ENCODE measurements at regions of chr12 and their contacts with region 1.

Region 1: DNA sequence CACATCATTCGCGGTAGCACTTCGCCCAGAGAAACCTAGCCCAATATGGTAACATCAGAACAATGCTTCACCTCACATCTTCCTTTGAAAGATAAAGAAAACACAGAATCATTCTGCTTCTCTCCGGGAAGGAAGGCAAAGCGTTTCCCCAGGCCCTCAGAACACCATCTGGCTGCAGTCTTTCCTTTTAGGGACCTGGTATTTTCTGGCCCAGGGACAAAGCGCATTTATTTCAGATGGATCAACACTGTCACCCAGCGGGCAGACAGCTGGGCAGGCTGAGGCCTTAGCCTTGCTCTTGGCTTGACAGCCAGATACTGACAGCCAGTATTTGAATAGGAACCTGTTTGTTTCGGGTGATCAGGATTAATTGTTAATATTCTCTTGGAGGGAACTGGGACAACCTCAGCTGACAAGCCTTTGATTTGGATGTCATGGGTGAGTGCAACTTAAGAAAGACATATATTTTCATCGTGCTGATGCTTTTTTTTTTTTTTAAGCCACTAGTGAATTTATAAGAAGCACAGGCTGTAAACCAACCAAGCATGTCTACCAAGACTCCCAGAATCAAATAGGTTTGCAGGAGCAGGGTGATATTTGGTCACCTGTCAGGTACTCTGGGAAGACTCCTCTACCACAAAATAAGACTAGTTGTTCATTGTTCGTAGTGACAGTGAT is 118.9 kb downstream of the VEZT start:
- DNase-seq: peak; percentile 77 to 90
- ATAC-seq: peak; percentile 85 to 88
- H3K4me3 ChIP-seq: no peak overlapping the region
- H3K27ac ChIP-seq: peak overlapping the region; percentile 72 to 87
- H3K4me1 ChIP-seq: peaks cover 66% of the 10 kb centered on the region
- CTCF ChIP-seq: peak; percentile 99
- EP300 ChIP-seq: no peak
- POLR2A ChIP-seq: no peak
- RAD21 ChIP-seq: peak; percentile 99 to 100

Region 2: DNA sequence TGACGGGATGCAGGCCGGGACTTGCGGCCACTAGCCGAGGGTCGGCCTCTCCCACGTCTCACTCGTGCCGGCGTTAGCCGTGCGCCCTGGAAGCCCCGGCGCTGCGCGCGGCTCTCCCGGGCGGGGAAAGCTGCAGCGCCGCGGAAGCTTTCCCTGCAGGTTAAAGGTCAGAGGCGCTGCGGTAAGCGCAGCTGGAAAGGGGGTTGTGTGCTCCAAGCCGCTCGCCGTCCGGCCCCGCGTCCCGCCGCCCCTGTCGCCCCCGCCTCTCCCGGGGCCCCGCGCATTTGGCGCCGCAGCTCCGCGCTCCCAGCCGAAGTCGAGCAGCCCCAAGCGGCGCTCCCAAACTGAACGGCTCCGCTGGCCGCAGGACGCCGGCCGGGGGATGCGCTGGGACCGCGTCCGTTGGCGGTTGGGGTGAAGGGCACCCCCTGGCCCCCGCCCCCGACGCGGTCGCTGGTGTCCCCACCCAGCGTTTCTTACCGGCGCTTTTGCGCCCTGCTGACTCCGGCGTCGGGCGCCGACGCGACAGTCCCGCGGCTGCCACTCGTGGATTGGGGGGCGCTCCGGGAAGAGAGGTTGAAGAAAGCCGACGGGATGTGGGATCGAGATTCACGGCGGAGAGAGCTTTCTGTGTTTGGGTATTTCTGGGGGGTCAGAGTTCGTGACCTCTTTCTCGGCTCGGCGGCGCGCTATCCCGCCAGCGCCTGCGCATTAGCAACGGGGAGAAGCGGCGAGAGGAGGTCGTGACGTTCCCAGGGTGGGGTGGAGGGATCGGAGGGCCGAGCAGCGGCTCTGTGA is 263.4 kb before region 1 on chr12 and contains the start of gene NR2C1:
- CTCF ChIA-PET with region 1: interaction called, 14 read pairs
- POLR2A ChIA-PET with region 1: no interaction called
- DNase-seq: peak; percentile 97 to 99
- ATAC-seq: peak; percentile 97 to 98
- H3K4me3 ChIP-seq: peak within 1 kb of the TSS; percentile 85
- H3K27ac ChIP-seq: peak within 1 kb of the TSS; percentile 85 to 93
- H3K4me1 ChIP-seq: peaks cover 10% of the 10 kb centered on the region
- CTCF ChIP-seq: no peak; the same call in 2 of the 3 replicates
- EP300 ChIP-seq: no peak; a peak in 1 of 5 replicates
- POLR2A ChIP-seq: peak; percentile 36
- RAD21 ChIP-seq: no peak; a peak in 1 of 5 replicates
- polyA plus RNA-seq, gene NR2C1: 50.9 and 55.2 TPM in 2 replicates

Region 3: DNA sequence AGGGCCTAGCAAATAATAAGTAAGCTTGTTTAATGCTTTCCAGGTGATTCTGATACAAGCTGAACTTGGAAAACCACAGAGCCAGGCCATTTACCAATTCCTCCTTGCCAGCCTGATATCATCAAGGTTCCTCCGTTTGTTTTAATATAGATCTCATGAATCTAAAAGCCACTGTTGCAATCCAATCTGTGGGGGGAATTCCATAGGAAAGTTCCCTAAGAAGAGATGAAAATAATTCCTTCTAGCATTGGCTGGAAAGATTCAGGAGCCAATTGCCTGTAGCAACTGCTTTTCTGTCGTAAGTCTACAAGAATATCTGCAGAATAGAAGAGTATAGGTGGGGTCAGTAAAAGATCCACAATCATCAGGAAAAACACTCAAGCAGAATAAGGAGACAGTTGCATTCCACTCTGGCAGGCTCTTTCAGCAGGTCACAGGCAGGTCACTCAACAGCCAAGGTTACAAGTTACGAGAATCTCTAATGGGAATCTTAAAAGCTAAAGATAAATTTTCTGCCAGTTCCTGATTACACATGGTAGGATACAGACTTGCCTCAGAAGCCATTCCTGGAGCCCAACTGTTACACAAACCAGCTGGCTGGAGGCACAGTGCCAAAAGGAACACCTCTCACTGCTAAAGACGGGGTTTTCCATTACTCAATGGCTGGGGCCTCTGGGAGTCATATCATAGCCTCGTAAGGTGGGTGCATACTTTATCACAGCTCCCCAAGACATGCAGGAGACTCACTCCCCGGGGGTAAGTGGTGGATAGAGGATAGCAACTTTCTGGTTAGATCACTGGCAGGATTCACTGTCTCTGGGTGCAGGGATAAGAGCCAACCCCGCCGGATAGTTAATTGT is 162.9 kb before region 1 on chr12:
- CTCF ChIA-PET with region 1: no interaction called
- POLR2A ChIA-PET with region 1: no interaction called
- DNase-seq: peak; percentile 70 to 90
- ATAC-seq: peak; percentile 78 to 85
- H3K4me3 ChIP-seq: no peak overlapping the region
- H3K27ac ChIP-seq: peak overlapping the region; percentile 80 to 92
- H3K4me1 ChIP-seq: peaks cover 94% of the 10 kb centered on the region
- CTCF ChIP-seq: no peak
- EP300 ChIP-seq: peak in 1 of 2 experiments; percentile 87; a peak in 4 of 5 replicates
- POLR2A ChIP-seq: no peak
- RAD21 ChIP-seq: no peak; a peak in 2 of 5 replicates

Region 4: DNA sequence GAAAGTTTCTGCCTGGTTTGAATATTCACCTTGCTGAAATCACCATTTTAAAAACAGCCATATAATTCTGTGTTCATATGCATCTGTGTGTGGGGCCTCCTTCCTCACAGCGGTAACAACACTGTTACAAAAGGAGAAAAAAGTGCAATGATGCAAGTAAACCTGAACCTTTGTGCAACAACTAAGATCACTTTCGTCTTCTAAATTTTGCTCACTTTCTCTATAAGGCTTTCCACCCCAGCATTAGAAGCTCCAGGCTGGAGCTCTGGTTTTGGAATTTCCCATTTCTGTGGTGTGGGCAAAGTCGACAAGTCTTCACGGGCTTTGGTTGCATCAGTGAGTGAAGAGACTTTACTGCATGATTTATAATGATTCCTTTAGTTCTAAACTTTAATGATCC is 137.6 kb before region 1 on chr12:
- CTCF ChIA-PET with region 1: interaction called, 19 read pairs
- POLR2A ChIA-PET with region 1: interaction called, 5 read pairs
- DNase-seq: peak in 1 of 2 experiments; percentile 31
- ATAC-seq: no peak
- H3K4me3 ChIP-seq: 0 out of 3 replicates have a peak overlapping the region, but pooled peaks have one; percentile 10
- H3K27ac ChIP-seq: peak overlapping the region; percentile 95 to 99
- H3K4me1 ChIP-seq: peaks cover 62% of the 10 kb centered on the region
- CTCF ChIP-seq: no peak
- EP300 ChIP-seq: no peak
- POLR2A ChIP-seq: no peak
- RAD21 ChIP-seq: no peak

Region 5: GRCh38 chr12:95318071-95318545 is 18.4 kb before region 1 on chr12:
- CTCF ChIA-PET with region 1: interaction called, 22 read pairs
- POLR2A ChIA-PET with region 1: no interaction called
- DNase-seq: peak; percentile 59 to 96
- ATAC-seq: peak; percentile 84 to 89
- H3K4me3 ChIP-seq: no peak overlapping the region
- H3K27ac ChIP-seq: peak overlapping the region; percentile 88 to 89
- H3K4me1 ChIP-seq: peaks cover 75% of the 10 kb centered on the region
- CTCF ChIP-seq: no peak
- EP300 ChIP-seq: peak; percentile 98 to 99
- POLR2A ChIP-seq: no peak
- RAD21 ChIP-seq: peak; percentile 29 to 58; a peak in 4 of 5 replicates

Region 6: DNA sequence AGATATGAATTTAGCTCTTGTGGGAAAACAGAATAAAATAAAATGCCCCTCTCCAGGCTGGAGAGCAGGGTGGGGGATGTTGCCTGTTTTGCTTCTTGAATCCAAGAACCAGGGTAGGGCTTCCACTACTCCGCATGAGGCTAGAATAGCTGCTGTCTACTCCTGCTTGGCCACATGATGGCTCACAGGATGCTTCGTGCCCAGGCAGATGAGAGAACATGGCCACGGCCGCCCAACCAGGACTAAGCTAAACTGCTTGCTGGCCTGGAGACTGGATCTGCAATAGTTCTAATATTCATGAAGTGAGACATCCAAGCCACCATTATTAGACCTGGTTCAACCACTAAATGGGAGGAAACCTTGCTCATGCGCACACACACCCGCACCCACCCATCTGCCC is 15.2 kb after region 1 on chr12:
- CTCF ChIA-PET with region 1: interaction called, 18 read pairs
- POLR2A ChIA-PET with region 1: no interaction called
- DNase-seq: no peak
- ATAC-seq: peak in 1 of 2 experiments; percentile 65; a peak in 4 of 6 replicates
- H3K4me3 ChIP-seq: no peak overlapping the region
- H3K27ac ChIP-seq: no peak overlapping the region
- H3K4me1 ChIP-seq: no peaks in the 10 kb centered on the region
- CTCF ChIP-seq: no peak
- EP300 ChIP-seq: no peak
- POLR2A ChIP-seq: no peak
- RAD21 ChIP-seq: no peak